Sigmoid colon (tissue), 7 donors: ENCODE measurements at regions of chr10 and their contacts with region 1.

Region 1: DNA sequence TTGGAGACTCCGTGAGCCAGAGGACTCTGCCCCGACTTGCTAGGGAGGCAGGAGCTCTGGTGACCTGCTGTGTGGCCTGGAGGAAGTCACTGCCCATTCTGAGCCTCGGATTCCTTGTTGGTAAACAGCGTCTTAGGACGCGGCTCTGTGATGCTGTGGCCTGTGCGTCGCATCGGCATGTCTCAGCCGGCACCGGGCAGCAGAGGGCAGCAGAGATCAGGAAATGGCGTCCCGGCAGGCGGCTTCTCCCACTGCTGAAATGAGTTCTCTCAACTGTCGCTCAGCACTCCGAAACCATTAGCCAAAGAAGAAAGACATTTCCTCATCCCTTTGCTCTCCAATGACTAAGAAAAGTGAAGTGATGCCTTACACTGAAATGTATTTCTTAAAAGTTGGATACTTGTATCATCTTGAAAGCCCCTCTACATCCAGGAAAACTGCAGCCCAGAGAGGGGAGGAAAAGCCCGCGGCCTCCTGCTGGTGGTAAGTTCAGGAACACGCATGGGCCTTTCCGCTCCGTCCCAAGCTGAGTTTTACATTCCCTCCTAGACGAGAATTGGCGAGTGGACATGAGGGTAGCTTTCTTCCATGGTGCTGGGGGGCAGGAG is 91.7 kb downstream of the WDR11 start:
- DNase-seq: peak; percentile 88
- H3K4me3 ChIP-seq: no peak overlapping the region
- H3K27ac ChIP-seq: no peak overlapping the region
- H3K4me1 ChIP-seq: peaks cover 0 to 21% (median 16%) of the 10 kb centered on the region in 4 donors
- H3K27me3 ChIP-seq: no peaks in the 10 kb centered on the region
- CTCF ChIP-seq: peak; percentile 84 to 87 (median 86)
- EP300 ChIP-seq: no peak
- POLR2A ChIP-seq: no peak

Region 2: GRCh38 chr10:121886997-121887622 is 944.2 kb after region 1 on chr10:
- intact Hi-C with region 1: loop called (anchors 1 kb)
- DNase-seq: peak; percentile 75
- H3K4me3 ChIP-seq: no peak overlapping the region
- H3K27ac ChIP-seq: no peak overlapping the region
- H3K4me1 ChIP-seq: no peaks in the 10 kb centered on the region
- H3K27me3 ChIP-seq: no peaks in the 10 kb centered on the region
- CTCF ChIP-seq: peak; percentile 67 to 81 (median 77)
- EP300 ChIP-seq: no peak
- POLR2A ChIP-seq: no peak